CD8-positive, alpha-beta memory T cell (primary cell): ENCODE measurements at regions of chr22 and their contacts with region 1.

Region 1: GRCh38 chr22:22877523-22878210 is 9.9 kb upstream of the IGLL5 start:
- DNase-seq: peak; percentile 63 to 84 (median 75)
- H3K4me3 ChIP-seq: no peak overlapping the region
- H3K4me3 Mint-ChIP-seq: no peak overlapping the region
- H3K27ac ChIP-seq: no peak overlapping the region
- H3K27ac Mint-ChIP-seq: peak overlapping the region in 4 of 8 donors; percentile 43 to 69 (median 58)
- H3K4me1 ChIP-seq: no peaks in the 10 kb centered on the region
- H3K4me1 Mint-ChIP-seq: peaks cover 14 to 18% (median 17%) of the 10 kb centered on the region in 3 donors
- H3K27me3 ChIP-seq: no peaks in the 10 kb centered on the region
- H3K27me3 Mint-ChIP-seq: peaks cover 0 to 4% of the 10 kb centered on the region in 2 donors

Region 2: GRCh38 chr22:22761963-22762772 is 115.5 kb before region 1 on chr22:
- CTCF ChIA-PET with region 1: interaction called, 60 read pairs
- POLR2A ChIA-PET with region 1: no interaction called
- DNase-seq: no peak
- H3K4me3 ChIP-seq: no peak overlapping the region
- H3K4me3 Mint-ChIP-seq: peak overlapping the region in 6 of 7 donors; percentile 39 to 76 (median 68)
- H3K27ac ChIP-seq: peak overlapping the region; percentile 14
- H3K27ac Mint-ChIP-seq: peak overlapping the region; percentile 50 to 91 (median 78)
- H3K4me1 ChIP-seq: peaks cover 11% of the 10 kb centered on the region
- H3K4me1 Mint-ChIP-seq: peaks cover 68 to 93% (median 81%) of the 10 kb centered on the region in 3 donors
- H3K27me3 ChIP-seq: no peaks in the 10 kb centered on the region
- H3K27me3 Mint-ChIP-seq: peaks cover 0 to 2% of the 10 kb centered on the region in 2 donors

Region 3: GRCh38 chr22:22779213-22779612 is 98.5 kb before region 1 on chr22:
- CTCF ChIA-PET with region 1: interaction called, 12 read pairs
- POLR2A ChIA-PET with region 1: no interaction called
- DNase-seq: no peak
- H3K4me3 ChIP-seq: no peak overlapping the region
- H3K4me3 Mint-ChIP-seq: no peak overlapping the region
- H3K27ac ChIP-seq: no peak overlapping the region
- H3K27ac Mint-ChIP-seq: peak overlapping the region in 1 of 8 donors; percentile 39
- H3K4me1 ChIP-seq: no peaks in the 10 kb centered on the region
- H3K4me1 Mint-ChIP-seq: peaks cover 25 to 35% (median 26%) of the 10 kb centered on the region in 3 donors
- H3K27me3 ChIP-seq: no peaks in the 10 kb centered on the region
- H3K27me3 Mint-ChIP-seq: no peaks in the 10 kb centered on the region

Region 4: GRCh38 chr22:22802339-22802970 is 75.2 kb before region 1 on chr22:
- CTCF ChIA-PET with region 1: interaction called, 247 read pairs
- POLR2A ChIA-PET with region 1: no interaction called
- DNase-seq: peak in 1 of 5 donors; percentile 52
- H3K4me3 ChIP-seq: no peak overlapping the region
- H3K4me3 Mint-ChIP-seq: peak overlapping the region in 2 of 7 donors; percentile 9 to 29
- H3K27ac ChIP-seq: no peak overlapping the region
- H3K27ac Mint-ChIP-seq: peak overlapping the region; percentile 37 to 81 (median 53)
- H3K4me1 ChIP-seq: peaks cover 6% of the 10 kb centered on the region
- H3K4me1 Mint-ChIP-seq: peaks cover 73 to 90% (median 88%) of the 10 kb centered on the region in 3 donors
- H3K27me3 ChIP-seq: no peaks in the 10 kb centered on the region
- H3K27me3 Mint-ChIP-seq: no peaks in the 10 kb centered on the region

Region 5: GRCh38 chr22:22855617-22856308 is 21.9 kb before region 1 on chr22:
- CTCF ChIA-PET with region 1: interaction called, 46 read pairs
- POLR2A ChIA-PET with region 1: no interaction called
- DNase-seq: peak; percentile 5 to 65 (median 21)
- H3K4me3 ChIP-seq: no peak overlapping the region
- H3K4me3 Mint-ChIP-seq: no peak overlapping the region
- H3K27ac ChIP-seq: no peak overlapping the region
- H3K27ac Mint-ChIP-seq: peak overlapping the region in 4 of 8 donors; percentile 42 to 74 (median 64)
- H3K4me1 ChIP-seq: no peaks in the 10 kb centered on the region
- H3K4me1 Mint-ChIP-seq: peaks cover 14 to 31% (median 17%) of the 10 kb centered on the region in 3 donors
- H3K27me3 ChIP-seq: no peaks in the 10 kb centered on the region
- H3K27me3 Mint-ChIP-seq: peaks cover 0 to 2% of the 10 kb centered on the region in 2 donors